Breast epithelium (tissue), 4 donors: ENCODE measurements at regions of chr2 and their contacts with region 1.

Region 1: DNA sequence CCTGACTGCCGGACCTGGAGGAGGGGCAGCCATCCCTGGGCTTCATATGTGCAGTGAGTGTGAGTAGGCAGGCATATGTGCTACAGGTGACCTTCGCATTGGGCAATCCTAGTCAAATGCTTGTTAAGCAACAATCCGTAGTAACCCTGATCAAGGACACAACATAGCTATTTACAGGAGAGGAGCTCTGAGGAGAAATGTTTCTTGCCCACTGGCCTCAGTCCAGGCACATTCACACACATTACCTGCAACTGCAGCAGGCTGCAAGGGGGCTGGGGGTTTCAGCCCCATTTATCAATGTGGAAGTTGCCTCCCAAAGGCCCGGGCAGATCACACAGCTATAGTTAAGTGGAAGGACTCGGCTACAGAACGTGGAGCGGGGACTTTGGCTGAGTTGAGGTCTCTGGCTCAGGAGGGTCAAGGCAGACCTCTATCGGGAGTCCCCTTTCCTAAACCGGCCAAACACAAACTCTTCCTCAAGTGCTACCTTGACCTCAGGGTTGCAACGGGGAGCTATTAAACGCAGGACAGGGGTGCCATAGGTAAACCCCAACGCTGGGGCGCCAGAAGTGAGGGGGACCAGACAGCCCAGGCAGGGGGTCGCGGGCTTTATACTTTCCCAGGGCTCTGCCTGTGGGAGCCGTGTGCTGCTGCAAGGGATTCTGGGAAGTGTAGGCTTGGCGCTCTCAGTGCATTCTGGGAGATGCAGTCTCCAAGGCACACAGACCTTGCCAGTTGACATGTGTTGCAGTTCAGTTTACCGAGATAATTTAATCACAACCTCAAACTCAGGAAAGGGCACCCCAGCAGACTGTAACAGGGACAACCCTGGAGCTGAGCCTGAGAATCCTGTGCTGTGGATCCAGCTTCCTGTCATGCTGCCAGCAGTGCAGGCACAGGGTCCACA is 9.4 kb downstream of the KHK start:
- DNase-seq: no peak
- H3K4me3 ChIP-seq: peak overlapping the region; percentile 19 to 56 (median 40)
- H3K27ac ChIP-seq: no peak overlapping the region
- H3K4me1 ChIP-seq: peaks cover 0 to 4% of the 10 kb centered on the region in 2 donors
- H3K27me3 ChIP-seq: no peaks in the 10 kb centered on the region
- CTCF ChIP-seq: no peak
- POLR2A ChIP-seq: no peak

Region 2: GRCh38 chr2:27128668-27129209 is 32.7 kb after region 1 on chr2:
- intact Hi-C with region 1: loop called (anchors 2 kb)
- DNase-seq: no peak
- H3K4me3 ChIP-seq: no peak overlapping the region
- H3K27ac ChIP-seq: no peak overlapping the region
- H3K4me1 ChIP-seq: peaks cover 7 to 10% of the 10 kb centered on the region in 2 donors
- H3K27me3 ChIP-seq: no peaks in the 10 kb centered on the region
- CTCF ChIP-seq: no peak
- POLR2A ChIP-seq: no peak

Region 3: DNA sequence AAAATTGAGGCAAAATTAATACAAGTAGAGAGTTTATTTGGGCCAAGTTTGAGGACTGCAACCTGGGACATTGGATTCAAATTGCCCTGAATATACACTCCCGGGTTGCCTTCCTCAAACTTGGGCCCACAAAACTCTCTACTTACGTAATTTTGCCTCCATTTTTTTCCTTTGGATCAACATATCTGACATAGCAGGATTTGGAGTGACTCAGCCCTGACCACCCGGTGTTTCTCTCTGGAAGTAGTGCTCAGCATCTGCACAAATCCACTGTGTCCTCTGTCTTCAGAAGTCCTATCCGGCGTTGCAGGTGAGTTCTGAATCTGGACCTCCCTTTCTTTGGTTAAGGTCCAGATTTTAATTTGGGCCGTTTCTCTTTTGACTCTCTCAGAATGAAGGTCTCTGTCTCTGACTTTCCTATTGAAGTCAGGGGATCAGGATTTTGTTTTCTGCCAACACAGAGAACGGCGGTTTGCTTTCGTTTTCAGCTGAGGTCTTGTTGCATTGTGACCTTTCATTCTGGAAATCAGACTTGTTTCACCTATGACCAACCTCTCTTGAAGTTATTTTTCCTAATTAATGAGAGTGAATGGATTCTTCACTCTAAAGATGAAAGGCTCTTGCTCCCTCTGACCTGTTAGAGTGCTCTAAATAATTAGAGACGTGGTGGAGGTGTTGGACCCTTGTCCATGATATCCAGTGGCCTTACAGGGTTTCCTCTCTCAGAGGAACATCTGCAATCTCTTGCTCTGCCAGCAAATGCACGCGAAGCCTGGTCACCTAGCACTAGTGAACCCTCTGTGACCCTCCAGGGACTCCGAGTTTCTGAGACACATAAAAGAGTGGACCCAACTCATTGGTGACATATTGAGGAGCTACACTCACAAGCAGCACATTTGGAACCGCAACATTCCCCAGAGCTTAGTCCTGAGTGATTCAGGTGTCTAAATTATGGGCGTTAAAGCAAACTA is 66.4 kb after region 1 on chr2:
- intact Hi-C with region 1: no loop called
- DNase-seq: no peak
- H3K4me3 ChIP-seq: no peak overlapping the region
- H3K27ac ChIP-seq: no peak overlapping the region
- H3K4me1 ChIP-seq: no peaks in the 10 kb centered on the region
- H3K27me3 ChIP-seq: no peaks in the 10 kb centered on the region
- CTCF ChIP-seq: no peak
- POLR2A ChIP-seq: no peak

Region 4: DNA sequence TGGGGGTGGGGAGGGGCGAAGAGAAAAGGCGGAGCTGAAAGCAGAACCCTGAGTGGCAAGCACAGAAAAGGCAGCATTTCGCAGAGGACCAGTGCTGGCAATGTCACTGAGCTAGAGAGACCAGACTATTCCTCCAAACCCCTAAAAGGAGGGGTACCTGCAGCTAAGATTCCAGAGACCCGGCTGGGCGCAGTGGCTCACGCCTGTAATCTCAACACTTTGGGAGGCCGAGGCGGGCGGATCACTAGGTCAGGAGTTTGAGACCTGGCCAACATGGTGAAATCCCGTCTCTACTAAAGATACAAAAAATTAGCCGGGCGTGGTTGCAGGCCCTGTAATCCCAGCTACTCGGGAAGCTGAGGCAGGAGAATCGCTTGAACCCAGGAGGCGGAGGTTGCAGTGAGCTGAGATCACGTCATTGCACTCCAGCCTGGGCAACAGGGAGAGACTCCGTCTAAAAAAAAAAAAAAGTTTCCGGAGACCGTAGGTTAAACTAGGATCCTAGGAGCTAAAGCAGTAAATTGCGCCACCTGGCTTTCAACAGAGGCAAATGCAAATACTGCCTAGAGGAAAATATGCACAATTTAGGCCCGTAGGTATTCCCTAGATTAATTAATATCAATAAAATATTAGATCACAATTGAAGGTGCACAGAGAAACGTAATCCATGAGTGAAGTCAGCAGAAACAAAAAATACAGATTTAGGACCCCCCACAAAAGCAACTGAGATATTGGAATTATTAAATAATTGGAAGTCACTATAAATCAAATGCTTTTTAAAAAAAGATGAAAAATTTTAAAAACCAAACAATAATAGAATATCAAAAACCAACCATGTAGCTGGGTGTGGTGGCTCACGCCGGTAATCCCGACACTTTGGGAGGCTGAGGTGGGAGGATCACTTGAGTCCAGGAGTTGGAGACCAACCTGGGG is 207.4 kb after region 1 on chr2:
- intact Hi-C with region 1: loop called (anchors 10 kb)
- DNase-seq: no peak
- H3K4me3 ChIP-seq: peak overlapping the region; percentile 25 to 44 (median 39)
- H3K27ac ChIP-seq: no peak overlapping the region
- H3K4me1 ChIP-seq: no peaks in the 10 kb centered on the region
- H3K27me3 ChIP-seq: peaks cover 17 to 29% of the 10 kb centered on the region in 2 donors
- CTCF ChIP-seq: peak; percentile 63 to 78 (median 64)
- POLR2A ChIP-seq: no peak

Region 5: GRCh38 chr2:27735263-27735953 is 639.4 kb after region 1 on chr2:
- intact Hi-C with region 1: no loop called
- DNase-seq: peak; percentile 79 to 82
- H3K4me3 ChIP-seq: peak overlapping the region; percentile 37 to 66 (median 57)
- H3K27ac ChIP-seq: peak overlapping the region; percentile 89 to 92
- H3K4me1 ChIP-seq: peaks cover 0 to 5% of the 10 kb centered on the region in 2 donors
- H3K27me3 ChIP-seq: no peaks in the 10 kb centered on the region
- CTCF ChIP-seq: no peak
- POLR2A ChIP-seq: peak; percentile 34